K562 (cell line): ENCODE measurements at regions of chr17 and their contacts with region 1.

Region 1: GRCh38 chr17:64320613-64321553 is 57.8 kb upstream of the TEX2 start:
- DNase-seq: peak; percentile 80 to 84 (median 84)
- ATAC-seq: peak; percentile 88
- H3K4me3 ChIP-seq: no peak overlapping the region
- H3K27ac ChIP-seq: no peak overlapping the region
- H3K4me1 ChIP-seq: peaks cover 0 to 7% of the 10 kb centered on the region in 2 experiments; a peak in 1 of 5 replicates
- H3K27me3 ChIP-seq: no peaks in the 10 kb centered on the region; a peak in 1 of 5 replicates
- CTCF ChIP-seq: peak; percentile 78 to 94 (median 83)
- EP300 ChIP-seq: peak; percentile 26; the same call in 1 of the 2 replicates
- POLR2A ChIP-seq: no peak
- RAD21 ChIP-seq: peak; percentile 91 to 96

Region 2: GRCh38 chr17:64256913-64257807 is 63.7 kb before region 1 on chr17:
- CTCF ChIA-PET with region 1: no interaction called
- POLR2A ChIA-PET with region 1: no interaction called
- in situ Hi-C with region 1: no loop called
- intact Hi-C with region 1: no loop called
- DNase-seq: no peak
- ATAC-seq: no peak
- H3K4me3 ChIP-seq: no peak overlapping the region
- H3K27ac ChIP-seq: no peak overlapping the region
- H3K4me1 ChIP-seq: peaks cover under 1 to 30% of the 10 kb centered on the region in 2 experiments; a peak in 4 of 5 replicates
- H3K27me3 ChIP-seq: no peaks in the 10 kb centered on the region
- CTCF ChIP-seq: no peak
- EP300 ChIP-seq: no peak
- POLR2A ChIP-seq: no peak
- RAD21 ChIP-seq: no peak

Region 3: DNA sequence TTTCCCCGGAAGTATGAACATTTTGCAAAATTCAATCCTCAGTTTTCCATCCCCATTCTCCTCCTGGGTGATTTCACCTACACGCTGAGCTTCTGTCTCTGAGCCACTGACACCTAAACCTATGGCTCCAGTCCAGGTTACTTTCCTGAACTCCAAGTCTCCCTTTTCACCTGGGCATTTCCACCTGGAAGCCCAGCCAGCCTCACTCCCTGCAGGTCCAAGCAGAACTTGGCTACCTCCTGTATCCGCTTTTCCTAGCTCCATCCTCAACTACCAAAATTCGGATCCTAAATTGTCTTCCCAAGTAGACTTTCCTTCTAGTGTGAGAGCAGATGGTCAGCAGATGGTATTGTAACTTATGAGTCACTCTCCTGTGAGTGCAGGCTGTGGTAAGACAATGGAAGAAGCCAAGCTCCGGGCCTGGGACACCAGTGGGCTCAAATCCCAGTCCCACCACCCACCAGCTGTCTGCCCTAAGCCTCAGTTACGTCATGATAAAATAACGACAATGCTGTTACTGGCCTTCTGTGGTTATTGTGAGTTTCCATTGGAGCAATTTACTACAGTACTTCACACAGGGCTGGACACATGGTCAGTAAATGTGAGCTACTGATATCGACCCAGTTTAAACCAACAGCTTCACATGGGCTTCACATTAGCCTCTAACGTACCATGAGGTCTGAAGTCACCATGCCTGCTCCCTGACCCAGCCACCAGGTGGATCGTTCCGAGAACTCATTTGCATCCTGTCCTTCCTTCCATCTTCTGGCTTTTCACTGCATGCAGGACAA is 36.5 kb after region 1 on chr17:
- CTCF ChIA-PET with region 1: no interaction called
- POLR2A ChIA-PET with region 1: no interaction called
- in situ Hi-C with region 1: no loop called
- intact Hi-C with region 1: loop called (anchors 5 kb)
- DNase-seq: peak in 1 of 4 experiments; percentile 19
- ATAC-seq: peak; percentile 53
- H3K4me3 ChIP-seq: no peak overlapping the region
- H3K27ac ChIP-seq: no peak overlapping the region
- H3K4me1 ChIP-seq: peaks cover 0 to 3% of the 10 kb centered on the region in 2 experiments; a peak in 2 of 5 replicates
- H3K27me3 ChIP-seq: no peaks in the 10 kb centered on the region
- CTCF ChIP-seq: no peak
- EP300 ChIP-seq: no peak
- POLR2A ChIP-seq: no peak
- RAD21 ChIP-seq: no peak

Region 4: DNA sequence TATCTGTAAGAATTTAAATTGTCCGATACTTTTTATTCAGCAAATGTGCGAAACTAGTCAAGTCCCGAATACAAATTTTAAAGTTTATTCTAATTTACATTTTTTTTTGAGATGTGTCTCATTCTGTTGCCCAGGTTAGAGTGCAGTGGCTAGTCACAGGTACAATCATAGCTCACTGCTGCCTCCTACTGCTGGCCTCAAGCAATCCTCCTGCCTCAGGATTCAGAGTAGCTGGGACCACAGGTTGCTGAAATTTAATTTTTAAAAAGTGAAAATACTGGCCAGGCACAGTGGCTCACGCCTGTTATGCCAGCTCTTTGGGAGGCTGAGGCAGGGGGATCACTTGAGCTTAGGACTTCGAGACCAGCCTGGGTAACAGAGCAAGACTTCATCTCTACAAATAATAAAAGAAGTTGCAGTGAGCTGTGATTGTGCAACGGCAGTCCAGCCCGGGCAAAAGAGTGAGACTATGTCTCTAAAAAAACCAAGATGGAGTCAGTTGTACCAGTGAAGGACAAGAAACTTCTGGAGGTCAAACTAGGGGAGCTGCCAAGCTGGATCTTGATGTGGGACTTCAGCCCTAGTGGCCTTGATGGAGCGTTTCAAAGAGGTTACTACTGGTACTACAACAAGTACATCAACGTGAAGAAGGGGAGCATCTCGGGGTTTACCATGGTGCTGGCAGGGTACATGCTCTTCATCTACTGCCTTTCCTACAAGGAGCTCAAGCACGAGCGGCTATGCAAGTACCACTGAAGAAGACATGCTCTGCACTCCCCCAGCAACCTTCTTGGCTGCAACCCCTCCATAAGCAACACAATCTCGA is 170.4 kb after region 1 on chr17:
- CTCF ChIA-PET with region 1: no interaction called
- POLR2A ChIA-PET with region 1: no interaction called
- in situ Hi-C with region 1: no loop called
- intact Hi-C with region 1: loop called (anchors 5 kb)
- DNase-seq: peak in 1 of 4 experiments; percentile 64
- ATAC-seq: peak; percentile 64
- H3K4me3 ChIP-seq: no peak overlapping the region
- H3K27ac ChIP-seq: no peak overlapping the region
- H3K4me1 ChIP-seq: peaks cover 0 to 4% of the 10 kb centered on the region in 2 experiments; a peak in 1 of 5 replicates
- H3K27me3 ChIP-seq: no peaks in the 10 kb centered on the region
- CTCF ChIP-seq: peak; percentile 54 to 65 (median 62)
- EP300 ChIP-seq: no peak
- POLR2A ChIP-seq: no peak
- RAD21 ChIP-seq: peak; percentile 39 to 64

Region 5: GRCh38 chr17:64661976-64662773 is 341.3 kb after region 1 on chr17 and contains the start of gene SMURF2:
- CTCF ChIA-PET with region 1: no interaction called
- POLR2A ChIA-PET with region 1: no interaction called
- in situ Hi-C with region 1: loop called (anchors 10 kb)
- intact Hi-C with region 1: no loop called
- DNase-seq: peak; percentile 74 to 94 (median 92)
- ATAC-seq: peak; percentile 88
- H3K4me3 ChIP-seq: peak within 1 kb of the TSS; percentile 85
- H3K27ac ChIP-seq: peak within 1 kb of the TSS; percentile 88
- H3K4me1 ChIP-seq: peaks cover 7 to 11% of the 10 kb centered on the region in 2 experiments; a peak in 4 of 5 replicates
- H3K27me3 ChIP-seq: no peaks in the 10 kb centered on the region
- CTCF ChIP-seq: no peak
- EP300 ChIP-seq: no peak
- POLR2A ChIP-seq: peak; percentile 55; the same call in 1 of the 2 replicates
- RAD21 ChIP-seq: no peak
- polyA plus RNA-seq, gene SMURF2: 3.8 to 5.0 TPM

Region 6: DNA sequence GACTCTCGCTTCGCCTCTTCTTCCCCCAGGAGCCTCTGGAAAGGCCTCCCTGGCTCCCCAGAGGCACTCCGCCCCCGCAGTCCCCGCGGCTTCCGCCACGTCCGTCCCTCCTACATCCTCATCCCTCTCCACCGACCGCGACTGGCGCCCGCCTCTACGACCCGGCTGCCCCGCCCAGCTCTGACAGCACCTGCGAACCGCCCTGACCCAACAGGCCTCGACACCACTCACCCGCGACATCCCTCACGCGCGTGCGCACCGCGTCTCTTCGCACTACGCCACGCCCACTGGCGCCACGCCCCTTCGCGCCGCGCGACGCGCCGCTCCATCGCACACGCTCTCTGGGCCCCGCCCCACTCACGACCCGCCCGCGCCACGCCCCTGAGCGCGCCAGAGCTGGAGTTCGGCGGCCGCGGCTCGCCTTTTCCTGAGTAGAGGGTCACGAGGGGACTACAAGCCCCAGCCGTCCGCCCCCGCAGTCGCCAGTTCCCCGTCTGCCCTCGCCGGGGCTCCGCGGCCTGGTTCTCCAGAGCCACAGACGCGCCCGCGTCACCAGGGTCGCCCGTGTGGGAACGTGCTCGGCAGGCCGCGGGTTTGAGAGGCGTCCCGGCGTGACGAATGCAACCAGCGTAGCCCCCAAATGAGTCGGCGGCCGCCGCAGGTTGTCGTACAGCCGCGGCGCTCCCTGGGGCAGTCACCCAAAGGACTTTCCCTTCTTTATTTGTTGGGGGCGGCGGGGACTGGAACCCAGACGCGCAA is 654.6 kb after region 1 on chr17:
- CTCF ChIA-PET with region 1: no interaction called
- POLR2A ChIA-PET with region 1: no interaction called
- in situ Hi-C with region 1: loop called (anchors 25 kb)
- intact Hi-C with region 1: no loop called
- DNase-seq: peak; percentile 95 to 97 (median 96)
- ATAC-seq: peak; percentile 94
- H3K4me3 ChIP-seq: peak overlapping the region; percentile 63
- H3K27ac ChIP-seq: peak overlapping the region; percentile 98
- H3K4me1 ChIP-seq: peaks cover 18 to 19% of the 10 kb centered on the region in 2 experiments
- H3K27me3 ChIP-seq: no peaks in the 10 kb centered on the region
- CTCF ChIP-seq: 0 out of 6 replicates have a peak, but pooled peaks of 1 of the 3 experiments have one; percentile 5
- EP300 ChIP-seq: peak; percentile 29; the same call in 1 of the 2 replicates
- POLR2A ChIP-seq: peak; percentile 91
- RAD21 ChIP-seq: peak; percentile 4 to 11; a peak in 1 of 4 replicates